Activated naive CD4-positive, alpha-beta T cell treated with anti-CD3 and anti-CD28 coated beads for 36 hours (primary cell): ENCODE measurements at regions of chr7 and their contacts with region 1.

Region 1: GRCh38 chr7:96495751-96496216 is 173.9 kb upstream of the SLC25A13 start:
- DNase-seq: peak; percentile 49
- H3K4me3 Mint-ChIP-seq: no peak overlapping the region
- H3K27ac Mint-ChIP-seq: peak overlapping the region; percentile 7
- H3K4me1 Mint-ChIP-seq: peaks cover 9% of the 10 kb centered on the region
- H3K27me3 Mint-ChIP-seq: peaks cover 2% of the 10 kb centered on the region

Region 2: GRCh38 chr7:95501261-95501832 is 994.4 kb before region 1 on chr7:
- CTCF ChIA-PET with region 1: no interaction called
- intact Hi-C with region 1: loop called (anchors 5 kb)
- DNase-seq: peak; percentile 52
- H3K4me3 Mint-ChIP-seq: no peak overlapping the region
- H3K27ac Mint-ChIP-seq: peak overlapping the region; percentile 37
- H3K4me1 Mint-ChIP-seq: peaks cover 24% of the 10 kb centered on the region
- H3K27me3 Mint-ChIP-seq: peaks cover 25% of the 10 kb centered on the region

Region 3: DNA sequence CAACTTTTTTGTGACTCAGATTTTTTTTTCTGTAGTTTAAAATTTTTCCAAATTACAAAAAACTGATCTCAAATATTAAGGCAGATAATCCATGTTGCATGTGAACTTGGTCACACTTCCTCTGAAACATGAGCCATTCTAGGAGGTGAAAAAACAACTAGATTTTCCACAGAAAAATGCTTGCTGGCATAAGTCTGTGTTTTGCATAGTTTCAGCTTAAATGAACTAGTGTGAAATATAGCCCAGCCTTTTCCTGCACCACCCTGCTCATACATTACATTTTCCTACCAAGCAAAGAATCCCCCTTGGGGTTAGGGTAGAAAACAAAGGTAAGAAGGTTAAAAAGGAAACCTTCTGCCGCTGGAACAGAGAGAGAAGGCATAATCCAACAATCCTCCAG is 222.1 kb before region 1 on chr7:
- CTCF ChIA-PET with region 1: no interaction called
- intact Hi-C with region 1: no loop called
- DNase-seq: no peak
- H3K4me3 Mint-ChIP-seq: no peak overlapping the region
- H3K27ac Mint-ChIP-seq: no peak overlapping the region
- H3K4me1 Mint-ChIP-seq: peaks cover 2% of the 10 kb centered on the region
- H3K27me3 Mint-ChIP-seq: no peaks in the 10 kb centered on the region

Region 4: DNA sequence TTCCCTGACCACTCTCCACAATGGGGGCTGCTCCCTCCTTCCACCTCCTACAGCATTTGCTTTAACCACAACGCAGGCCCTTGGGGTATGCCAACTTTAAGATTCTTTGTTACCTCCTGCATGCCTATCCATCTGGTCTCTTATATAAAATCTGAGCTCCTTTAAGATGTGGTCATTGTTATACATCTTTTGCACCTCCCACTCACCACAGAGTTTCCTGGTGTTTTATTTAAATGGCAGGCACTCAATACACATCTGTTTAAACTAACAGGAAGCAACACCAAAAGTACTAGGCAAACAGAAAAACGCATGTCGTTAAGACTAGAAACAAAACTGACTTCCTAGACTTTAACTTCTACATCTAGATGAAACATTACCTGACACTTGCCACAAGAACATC is 210.2 kb before region 1 on chr7:
- CTCF ChIA-PET with region 1: no interaction called
- intact Hi-C with region 1: loop called (anchors 5 kb)
- DNase-seq: peak; percentile 39
- H3K4me3 Mint-ChIP-seq: no peak overlapping the region
- H3K27ac Mint-ChIP-seq: peak overlapping the region; percentile 79
- H3K4me1 Mint-ChIP-seq: peaks cover 38% of the 10 kb centered on the region
- H3K27me3 Mint-ChIP-seq: no peaks in the 10 kb centered on the region

Region 5: DNA sequence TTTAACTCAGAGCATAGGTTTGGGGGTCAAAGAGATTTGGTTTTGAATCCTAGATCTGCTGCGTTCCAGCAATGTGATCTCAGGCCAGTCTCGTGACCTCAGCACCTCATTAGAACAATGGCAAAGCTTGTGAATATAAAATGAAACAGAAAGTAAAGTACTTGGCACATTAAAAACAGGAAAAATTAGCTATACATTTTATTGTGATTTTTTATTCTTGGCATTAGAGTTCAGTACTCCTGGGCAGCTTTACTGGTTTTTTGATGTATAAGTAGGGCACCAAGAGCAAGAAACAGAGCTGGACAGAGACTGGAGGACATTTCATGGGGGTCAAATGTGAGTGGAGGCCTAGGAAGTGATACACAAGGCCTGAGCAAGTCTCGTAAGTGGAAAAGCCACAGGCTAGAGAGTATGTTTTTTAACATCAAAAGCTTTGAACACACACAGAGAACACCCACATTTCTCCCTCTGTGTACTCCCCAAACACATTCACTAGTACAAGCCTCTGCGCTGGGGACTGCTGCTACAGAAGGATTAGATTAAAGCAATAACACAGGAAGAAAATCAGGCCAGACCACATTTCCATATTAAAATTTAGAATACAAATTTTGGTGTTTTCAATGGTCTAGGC is 16.7 kb before region 1 on chr7:
- CTCF ChIA-PET with region 1: no interaction called
- intact Hi-C with region 1: loop called (anchors 2 kb)
- DNase-seq: no peak
- H3K4me3 Mint-ChIP-seq: peak overlapping the region; percentile 36
- H3K27ac Mint-ChIP-seq: no peak overlapping the region
- H3K4me1 Mint-ChIP-seq: peaks cover 12% of the 10 kb centered on the region
- H3K27me3 Mint-ChIP-seq: peaks cover 3% of the 10 kb centered on the region

Region 6: DNA sequence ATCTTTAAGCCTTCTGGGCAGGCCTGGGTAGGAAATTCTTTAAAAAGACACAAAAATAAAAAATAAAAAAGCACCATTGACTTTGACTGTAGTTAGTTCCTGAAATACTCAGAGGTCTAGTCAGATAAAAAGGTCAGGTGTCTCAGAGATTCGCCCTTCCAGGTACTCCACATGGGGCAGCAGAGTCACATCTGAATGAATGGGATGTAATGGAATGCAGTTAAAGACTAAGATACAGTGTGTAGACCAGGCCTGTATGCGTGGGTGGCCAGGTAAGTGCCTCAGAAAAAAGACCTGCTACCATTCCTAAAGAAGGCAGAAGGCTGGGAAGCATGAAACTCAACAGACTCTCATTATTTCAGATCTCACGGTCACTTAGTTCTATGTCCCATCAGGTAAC is 282.5 kb after region 1 on chr7:
- CTCF ChIA-PET with region 1: no interaction called
- intact Hi-C with region 1: no loop called
- DNase-seq: no peak
- H3K4me3 Mint-ChIP-seq: no peak overlapping the region
- H3K27ac Mint-ChIP-seq: no peak overlapping the region
- H3K4me1 Mint-ChIP-seq: no peaks in the 10 kb centered on the region
- H3K27me3 Mint-ChIP-seq: peaks cover 21% of the 10 kb centered on the region